Heart left ventricle (tissue), 16 donors: ENCODE measurements at regions of chr4 and their contacts with region 1.

Region 1: DNA sequence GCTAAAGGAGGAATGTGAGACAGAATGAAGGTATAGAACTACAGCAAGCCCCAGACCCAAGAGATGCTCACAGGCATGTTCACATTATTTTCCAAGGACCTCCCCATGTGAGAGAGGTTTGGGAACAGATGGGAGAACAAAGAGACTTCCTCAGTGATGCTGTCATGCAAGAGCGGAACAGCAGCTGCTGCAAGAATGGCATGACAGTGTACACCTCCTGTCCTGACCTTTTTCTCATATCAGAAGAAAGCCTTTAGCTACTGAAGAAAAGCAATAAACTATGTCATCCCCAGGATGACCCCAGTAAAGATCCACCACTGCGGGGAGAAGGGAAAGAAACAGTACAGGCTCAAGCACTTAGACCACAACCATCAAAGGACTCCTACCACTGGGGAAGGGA is 7.2 kb downstream of the PRDM5 start:
- DNase-seq: no peak
- ATAC-seq: no peak
- H3K4me3 ChIP-seq: no peak overlapping the region
- H3K27ac ChIP-seq: no peak overlapping the region
- H3K4me1 ChIP-seq: peaks cover 0 to 24% (median 14%) of the 10 kb centered on the region in 12 donors
- H3K27me3 ChIP-seq: no peaks in the 10 kb centered on the region
- CTCF ChIP-seq: no peak
- POLR2A ChIP-seq: no peak

Region 2: GRCh38 chr4:120850018-120850599 is 65.2 kb before region 1 on chr4:
- intact Hi-C with region 1: loop called in 1 of 10 experiments (anchors 2 kb)
- DNase-seq: no peak
- ATAC-seq: no peak
- H3K4me3 ChIP-seq: no peak overlapping the region
- H3K27ac ChIP-seq: no peak overlapping the region
- H3K4me1 ChIP-seq: peaks cover 0 to 5% (median 0%) of the 10 kb centered on the region in 12 donors
- H3K27me3 ChIP-seq: no peaks in the 10 kb centered on the region
- CTCF ChIP-seq: no peak
- POLR2A ChIP-seq: no peak

Region 3: DNA sequence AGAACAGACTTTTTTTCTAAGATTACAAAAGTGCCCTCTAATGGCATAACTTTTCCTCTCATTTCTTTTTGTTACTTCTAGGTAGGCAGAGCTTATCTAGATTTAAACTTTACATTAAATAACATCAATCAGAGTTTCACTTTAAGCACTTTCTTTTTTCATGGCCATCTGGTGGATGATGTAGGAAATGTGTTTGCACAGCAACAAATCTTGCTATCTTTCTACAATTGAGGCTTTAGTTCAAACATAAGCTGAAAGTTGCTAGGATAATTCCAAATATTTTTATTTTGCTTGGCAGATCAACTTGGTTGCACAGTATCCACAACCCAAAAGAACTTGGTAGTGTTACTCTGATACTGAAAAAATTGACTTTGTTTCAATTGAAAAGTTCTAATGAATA is 135.0 kb after region 1 on chr4:
- intact Hi-C with region 1: no loop called
- DNase-seq: no peak
- ATAC-seq: no peak
- H3K4me3 ChIP-seq: no peak overlapping the region
- H3K27ac ChIP-seq: no peak overlapping the region
- H3K4me1 ChIP-seq: peaks cover 0 to 8% (median 0%) of the 10 kb centered on the region in 12 donors
- H3K27me3 ChIP-seq: no peaks in the 10 kb centered on the region
- CTCF ChIP-seq: peak in 8 of 12 donors; percentile 7 to 49 (median 38)
- POLR2A ChIP-seq: no peak

Region 4: GRCh38 chr4:122142686-122143085 is 1227.3 kb after region 1 on chr4:
- intact Hi-C with region 1: no loop called
- DNase-seq: no peak
- ATAC-seq: no peak
- H3K4me3 ChIP-seq: no peak overlapping the region
- H3K27ac ChIP-seq: no peak overlapping the region
- H3K4me1 ChIP-seq: no peaks in the 10 kb centered on the region
- H3K27me3 ChIP-seq: peaks cover 0 to 8% (median 0%) of the 10 kb centered on the region in 9 donors
- CTCF ChIP-seq: no peak
- POLR2A ChIP-seq: no peak